Mammary epithelial cell (primary cell): ENCODE measurements at regions of chr3 and their contacts with region 1.

Region 1: GRCh38 chr3:183904833-183905780 is 20.4 kb upstream of the PARL start:
- DNase-seq: no peak
- H3K4me3 ChIP-seq: no peak overlapping the region
- H3K27ac ChIP-seq: no peak overlapping the region
- H3K4me1 ChIP-seq: no peaks in the 10 kb centered on the region
- H3K27me3 ChIP-seq: no peaks in the 10 kb centered on the region
- CTCF ChIP-seq: no peak

Region 2: GRCh38 chr3:183584246-183584913 is 320.7 kb before region 1 on chr3:
- CTCF ChIA-PET with region 1: no interaction called
- dilution Hi-C with region 1: no loop called
- in situ Hi-C with region 1: no loop called
- intact Hi-C with region 1: no loop called
- DNase-seq: no peak
- H3K4me3 ChIP-seq: no peak overlapping the region
- H3K27ac ChIP-seq: no peak overlapping the region
- H3K4me1 ChIP-seq: no peaks in the 10 kb centered on the region
- H3K27me3 ChIP-seq: no peaks in the 10 kb centered on the region
- CTCF ChIP-seq: no peak

Region 3: GRCh38 chr3:184017672-184018423 is 112.7 kb after region 1 on chr3 and contains the start of gene ABCC5:
- CTCF ChIA-PET with region 1: interaction called, 4 read pairs
- dilution Hi-C with region 1: no loop called
- in situ Hi-C with region 1: loop called in 1 of 2 experiments (anchors 10 kb)
- intact Hi-C with region 1: loop called (anchors 1 kb)
- DNase-seq: peak; percentile 87
- H3K4me3 ChIP-seq: peak within 1 kb of the TSS; percentile 97 to 100 (median 100)
- H3K27ac ChIP-seq: peak within 1 kb of the TSS; percentile 35
- H3K4me1 ChIP-seq: peaks cover 17% of the 10 kb centered on the region
- H3K27me3 ChIP-seq: no peaks in the 10 kb centered on the region
- CTCF ChIP-seq: no peak
- total RNA-seq, gene ABCC5: 17.3 to 24.1 TPM

Region 4: GRCh38 chr3:184117636-184118035 is 212.5 kb after region 1 on chr3:
- CTCF ChIA-PET with region 1: no interaction called
- dilution Hi-C with region 1: no loop called
- in situ Hi-C with region 1: no loop called
- intact Hi-C with region 1: loop called (anchors 5 kb)
- DNase-seq: no peak
- H3K4me3 ChIP-seq: no peak overlapping the region
- H3K27ac ChIP-seq: no peak overlapping the region
- H3K4me1 ChIP-seq: no peaks in the 10 kb centered on the region
- H3K27me3 ChIP-seq: no peaks in the 10 kb centered on the region
- CTCF ChIP-seq: no peak

Region 5: DNA sequence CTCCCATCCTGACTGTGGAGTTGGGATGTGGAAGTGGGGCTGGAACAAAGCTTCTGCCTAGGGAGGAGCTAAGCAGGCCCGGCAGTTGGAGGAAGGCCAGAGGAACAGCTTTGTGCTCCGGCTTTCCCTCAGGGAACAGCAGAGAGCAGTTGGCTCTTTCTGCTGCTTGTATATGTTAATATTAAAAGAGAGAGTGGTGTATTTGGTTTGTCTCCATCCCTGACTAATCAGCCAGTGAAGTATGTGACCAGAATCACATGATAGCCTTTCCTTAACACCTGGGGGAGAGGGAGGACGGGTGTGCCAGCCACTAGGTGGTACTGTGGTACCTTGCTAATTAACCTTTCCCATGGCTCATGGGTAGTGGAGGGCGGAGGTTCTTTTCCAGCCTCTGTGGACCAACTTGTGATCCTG is 240.0 kb after region 1 on chr3:
- CTCF ChIA-PET with region 1: interaction called, 11 read pairs
- dilution Hi-C with region 1: no loop called
- in situ Hi-C with region 1: no loop called
- intact Hi-C with region 1: no loop called
- DNase-seq: peak; percentile 67
- H3K4me3 ChIP-seq: no peak overlapping the region
- H3K27ac ChIP-seq: no peak overlapping the region
- H3K4me1 ChIP-seq: no peaks in the 10 kb centered on the region
- H3K27me3 ChIP-seq: no peaks in the 10 kb centered on the region
- CTCF ChIP-seq: peak; percentile 74 to 80